ENCODE measurements at regions of chr12 and their contacts with region 1.

Region 1: GRCh38 chr12:6944381-6945186 is 762 bp downstream of the C12orf57 start:
- DNase-seq: peak; percentile 55 to 92 (median 65)
- ATAC-seq: peak; percentile 72
- H3K4me3 ChIP-seq: peak overlapping the region; percentile 49
- H3K27ac ChIP-seq: peak overlapping the region; percentile 96
- H3K4me1 ChIP-seq: peaks cover 13 to 50% of the 10 kb centered on the region in 2 experiments
- H3K27me3 ChIP-seq: no peaks in the 10 kb centered on the region
- CTCF ChIP-seq: peak; percentile 84 to 98 (median 92); a peak in 5 of 6 replicates
- EP300 ChIP-seq: no peak
- POLR2A ChIP-seq: no peak
- RAD21 ChIP-seq: peak; percentile 90 to 91

Region 2: DNA sequence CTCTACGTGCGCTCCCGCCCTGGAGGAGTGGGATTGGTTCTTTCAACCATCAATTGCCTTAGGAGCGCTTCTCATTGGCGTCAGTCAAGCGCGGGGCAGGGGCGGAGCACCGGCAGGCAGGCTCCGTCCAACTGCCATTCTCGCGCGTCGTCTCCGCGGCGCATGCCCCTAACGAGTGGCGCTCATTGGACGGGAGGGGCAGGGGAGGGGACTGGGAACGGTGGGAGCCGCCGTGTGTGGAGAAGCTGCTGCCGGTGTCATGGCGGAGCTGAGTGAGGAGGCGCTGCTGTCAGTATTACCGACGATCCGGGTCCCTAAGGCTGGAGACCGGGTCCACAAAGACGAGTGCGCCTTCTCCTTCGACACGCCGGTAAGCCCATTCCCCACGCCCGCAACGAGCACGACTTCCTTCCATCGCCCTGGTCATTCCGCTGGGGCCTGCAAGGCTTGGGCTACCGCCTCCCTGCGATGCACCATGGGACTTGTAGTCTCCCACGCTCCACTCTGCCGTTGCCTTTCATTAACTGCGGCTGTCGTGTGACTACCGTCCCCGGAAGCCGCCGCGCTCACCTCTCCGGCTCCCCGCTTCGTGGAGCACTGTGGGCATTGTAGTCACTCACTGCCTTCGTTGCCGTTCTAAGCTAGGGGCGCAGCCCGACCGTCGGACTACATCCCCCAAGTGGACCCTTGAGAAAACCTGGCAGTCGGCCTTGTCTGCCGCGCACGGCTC is 92.5 kb before region 1 on chr12 and contains the start of gene USP5:
- CTCF ChIA-PET with region 1: no interaction called
- POLR2A ChIA-PET with region 1: interaction called, 11 read pairs
- in situ Hi-C with region 1: no loop called
- intact Hi-C with region 1: no loop called
- DNase-seq: peak; percentile 87 to 98 (median 90)
- ATAC-seq: peak; percentile 87
- H3K4me3 ChIP-seq: peak within 1 kb of the TSS; percentile 79
- H3K27ac ChIP-seq: peak within 1 kb of the TSS; percentile 87
- H3K4me1 ChIP-seq: peaks cover 12 to 18% of the 10 kb centered on the region in 2 experiments; a peak in 4 of 5 replicates
- H3K27me3 ChIP-seq: no peaks in the 10 kb centered on the region
- CTCF ChIP-seq: 0 out of 6 replicates have a peak, but pooled peaks of 1 of the 3 experiments have one; percentile 1
- EP300 ChIP-seq: no peak
- POLR2A ChIP-seq: peak; percentile 79
- RAD21 ChIP-seq: no peak
- polyA plus RNA-seq, gene USP5: 1.4 to 3.4 TPM

Region 3: DNA sequence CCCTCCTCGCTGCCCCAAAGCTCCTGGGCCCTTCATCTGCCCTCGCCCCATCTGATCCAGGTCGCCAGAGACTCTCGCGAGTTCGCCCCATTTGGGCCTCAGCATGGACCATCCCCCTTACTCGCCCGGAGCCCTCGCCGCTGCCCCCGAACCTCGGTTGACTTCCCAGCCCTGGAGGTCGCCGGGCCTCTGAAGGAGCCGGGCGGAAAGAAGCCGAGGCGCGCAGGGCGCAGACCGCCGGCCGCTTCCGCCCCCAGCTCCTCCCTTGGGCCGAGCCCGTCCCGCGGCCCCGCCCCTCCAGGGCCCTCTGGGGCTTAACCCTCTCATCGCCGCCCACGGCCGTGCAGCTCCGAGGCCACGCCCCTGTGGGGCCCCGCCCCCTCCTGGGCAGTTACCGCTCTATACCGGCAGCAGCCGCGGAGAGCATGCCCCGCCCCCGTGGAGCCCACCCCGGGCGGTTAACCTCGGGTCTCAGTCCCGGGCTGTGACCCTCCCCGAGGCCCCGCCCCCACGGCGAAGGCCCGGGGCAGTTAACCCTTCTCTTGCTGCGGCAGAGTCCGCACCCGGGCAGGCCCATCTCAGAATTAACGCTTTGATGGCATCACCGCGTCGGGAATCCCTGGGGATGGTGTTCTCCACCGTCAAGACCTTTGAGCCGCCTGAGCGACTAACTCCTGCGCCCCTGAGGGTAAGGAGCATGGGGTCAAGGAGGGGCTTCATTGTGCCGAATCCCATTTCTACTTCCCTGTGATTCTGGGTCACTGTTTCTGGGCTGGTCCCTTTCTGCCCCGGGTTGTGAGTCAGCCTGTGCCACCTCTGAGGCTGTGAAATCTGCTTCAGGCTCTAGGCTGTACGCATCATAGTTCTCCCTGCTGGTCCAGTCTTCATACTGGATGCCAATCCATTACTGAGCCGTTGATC is 71.2 kb before region 1 on chr12 and contains the start of gene SPSB2:
- CTCF ChIA-PET with region 1: no interaction called
- POLR2A ChIA-PET with region 1: interaction called, 24 read pairs
- in situ Hi-C with region 1: loop called (anchors 5 kb)
- intact Hi-C with region 1: loop called (anchors 5 kb)
- DNase-seq: peak; percentile 89 to 96 (median 92)
- ATAC-seq: peak; percentile 88
- H3K4me3 ChIP-seq: peak within 1 kb of the TSS; percentile 73
- H3K27ac ChIP-seq: peak within 1 kb of the TSS; percentile 78
- H3K4me1 ChIP-seq: peaks cover 29 to 44% of the 10 kb centered on the region in 2 experiments; a peak in 4 of 5 replicates
- H3K27me3 ChIP-seq: no peaks in the 10 kb centered on the region
- CTCF ChIP-seq: no peak
- EP300 ChIP-seq: no peak
- POLR2A ChIP-seq: peak; percentile 75
- RAD21 ChIP-seq: no peak
- polyA plus RNA-seq, gene SPSB2: 0.10 to 0.29 TPM

Region 4: GRCh38 chr12:6927379-6928024 is 17.1 kb before region 1 on chr12 and contains the start of gene ATN1:
- CTCF ChIA-PET with region 1: no interaction called
- POLR2A ChIA-PET with region 1: interaction called, 61 read pairs
- in situ Hi-C with region 1: no loop called
- intact Hi-C with region 1: loop called (anchors 2 kb)
- DNase-seq: peak; percentile 70 to 78 (median 74)
- ATAC-seq: peak; percentile 47
- H3K4me3 ChIP-seq: peak within 1 kb of the TSS; percentile 76
- H3K27ac ChIP-seq: peak within 1 kb of the TSS; percentile 85
- H3K4me1 ChIP-seq: peaks cover 41 to 42% of the 10 kb centered on the region in 2 experiments; a peak in 4 of 5 replicates
- H3K27me3 ChIP-seq: no peaks in the 10 kb centered on the region
- CTCF ChIP-seq: no peak
- EP300 ChIP-seq: no peak
- POLR2A ChIP-seq: peak; percentile 69
- RAD21 ChIP-seq: no peak
- polyA plus RNA-seq, gene ATN1: 0.15 to 0.20 TPM

Region 5: DNA sequence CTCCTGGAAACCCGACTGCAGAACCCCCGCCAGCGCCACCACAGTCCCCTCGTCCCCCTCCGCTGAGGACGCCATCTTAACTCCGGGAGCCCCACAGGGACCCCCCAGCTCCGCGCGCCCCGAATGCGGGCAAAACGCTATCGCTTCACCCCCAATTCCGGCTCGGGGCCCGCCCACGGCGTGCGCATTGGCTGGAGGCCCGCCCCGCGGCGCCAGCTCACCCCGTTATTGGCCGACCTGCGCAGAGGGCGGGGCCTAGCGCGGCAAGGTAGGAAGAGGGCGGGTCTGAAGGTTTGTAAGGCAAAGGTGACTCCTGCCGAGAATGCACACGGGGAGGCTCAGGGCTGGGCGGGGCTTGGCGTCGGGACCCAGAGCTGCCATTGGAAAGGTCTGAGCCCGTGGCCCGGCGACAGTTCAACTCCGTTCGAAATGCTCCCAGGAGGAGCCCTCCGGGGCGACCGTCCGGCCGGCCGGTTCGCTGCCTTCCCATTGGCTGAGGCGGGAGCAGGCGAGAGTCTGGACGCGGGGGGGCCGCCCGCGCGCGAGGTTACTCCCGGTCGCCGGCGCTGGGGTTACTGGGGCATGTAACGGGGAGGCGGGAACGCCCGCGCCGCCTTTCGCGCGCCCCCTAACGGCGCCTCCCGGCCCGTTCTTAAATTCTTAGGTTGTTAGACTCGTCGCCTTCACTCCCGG is 73.9 kb after region 1 on chr12 and contains the start of gene LPCAT3:
- CTCF ChIA-PET with region 1: no interaction called
- POLR2A ChIA-PET with region 1: no interaction called
- in situ Hi-C with region 1: no loop called
- intact Hi-C with region 1: no loop called
- DNase-seq: peak; percentile 91 to 95 (median 92)
- ATAC-seq: peak; percentile 97
- H3K4me3 ChIP-seq: peak within 1 kb of the TSS; percentile 85
- H3K27ac ChIP-seq: peak within 1 kb of the TSS; percentile 84
- H3K4me1 ChIP-seq: peaks cover 5 to 24% of the 10 kb centered on the region in 2 experiments; a peak in 4 of 5 replicates
- H3K27me3 ChIP-seq: no peaks in the 10 kb centered on the region
- CTCF ChIP-seq: peak; percentile 78 to 85 (median 82)
- EP300 ChIP-seq: peak; percentile 41
- POLR2A ChIP-seq: peak; percentile 66
- RAD21 ChIP-seq: peak; percentile 57 to 66
- polyA plus RNA-seq, gene LPCAT3: 4.9 to 5.6 TPM

Region 6: GRCh38 chr12:7042842-7043241 is 98.3 kb after region 1 on chr12:
- CTCF ChIA-PET with region 1: interaction called, 14 read pairs
- POLR2A ChIA-PET with region 1: interaction called, 6 read pairs
- in situ Hi-C with region 1: no loop called
- intact Hi-C with region 1: loop called (anchors 1 kb)
- DNase-seq: peak; percentile 22 to 64 (median 40)
- ATAC-seq: peak; percentile 87
- H3K4me3 ChIP-seq: no peak overlapping the region
- H3K27ac ChIP-seq: no peak overlapping the region
- H3K4me1 ChIP-seq: no peaks in the 10 kb centered on the region; a peak in 1 of 5 replicates
- H3K27me3 ChIP-seq: no peaks in the 10 kb centered on the region
- CTCF ChIP-seq: peak; percentile 54 to 75 (median 59); a peak in 5 of 6 replicates
- EP300 ChIP-seq: no peak
- POLR2A ChIP-seq: no peak
- RAD21 ChIP-seq: peak; percentile 72 to 77